A549 (cell line): ENCODE measurements at regions of chr14 and their contacts with region 1.

Region 1: DNA sequence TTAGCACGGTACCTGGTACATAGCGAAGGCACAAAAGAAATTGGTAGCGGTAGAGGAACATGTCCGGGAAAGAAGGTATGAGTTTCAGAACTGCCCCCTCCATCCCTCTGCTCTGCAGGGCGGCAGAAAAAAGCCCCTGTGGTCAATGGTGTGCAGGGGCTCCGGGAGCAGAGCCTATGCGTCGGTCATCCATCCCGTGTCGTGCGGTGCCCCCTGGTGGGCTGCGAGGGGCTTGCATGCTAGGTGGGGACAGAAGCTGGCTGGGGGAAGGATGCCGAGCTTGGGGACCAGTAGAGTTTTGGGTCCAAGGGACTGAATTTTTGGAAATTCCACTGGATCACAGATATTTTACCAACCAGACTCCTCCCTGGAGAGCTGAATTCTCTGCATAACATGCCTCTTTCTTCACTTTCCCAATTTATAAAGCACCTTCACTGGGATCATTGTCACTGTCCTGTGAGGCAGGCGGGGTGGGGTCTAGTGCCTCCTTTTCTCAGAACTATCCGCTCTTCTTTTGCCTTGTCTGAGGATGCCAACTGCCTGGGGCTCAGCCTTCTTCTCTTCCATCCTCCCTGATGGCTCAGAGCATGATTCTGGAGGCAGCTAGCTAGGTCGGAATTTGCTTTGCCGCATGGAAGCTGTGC is 148.7 kb downstream of the SMOC1 start:
- DNase-seq: peak; percentile 55 to 81
- ATAC-seq: peak; percentile 78 to 92
- H3K4me3 ChIP-seq: no peak overlapping the region
- H3K27ac ChIP-seq: peak overlapping the region; percentile 58 to 75
- H3K4me1 ChIP-seq: peaks cover 18% of the 10 kb centered on the region
- CTCF ChIP-seq: peak; percentile 78
- EP300 ChIP-seq: no peak
- POLR2A ChIP-seq: no peak
- RAD21 ChIP-seq: peak; percentile 96 to 97

Region 2: GRCh38 chr14:69643443-69644164 is 384.3 kb before region 1 on chr14:
- CTCF ChIA-PET with region 1: no interaction called
- POLR2A ChIA-PET with region 1: no interaction called
- DNase-seq: peak; percentile 65 to 80
- ATAC-seq: peak; percentile 87 to 91
- H3K4me3 ChIP-seq: no peak overlapping the region
- H3K27ac ChIP-seq: peak overlapping the region; percentile 21 to 64; a peak in 4 of 6 replicates
- H3K4me1 ChIP-seq: peaks cover 39% of the 10 kb centered on the region
- CTCF ChIP-seq: no peak
- EP300 ChIP-seq: no peak
- POLR2A ChIP-seq: no peak
- RAD21 ChIP-seq: no peak

Region 3: DNA sequence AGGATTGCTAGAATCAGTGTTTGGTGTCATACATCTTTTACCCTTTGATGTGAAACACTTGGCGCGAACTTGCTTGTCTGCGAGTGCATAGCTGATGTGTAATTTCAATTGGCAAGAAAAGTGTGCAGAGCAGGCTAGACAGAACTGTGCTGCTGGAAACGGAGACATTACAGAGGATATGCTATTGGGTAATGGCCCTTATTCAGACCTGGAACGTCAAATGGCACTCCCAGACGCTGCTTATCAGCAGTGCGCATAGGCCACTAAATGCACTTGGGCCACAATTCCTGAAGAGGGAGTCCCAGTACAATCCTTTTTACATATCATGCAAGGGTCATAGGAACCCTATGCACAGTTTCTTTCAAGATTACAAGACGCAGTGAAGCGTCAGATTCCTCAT is 215.2 kb before region 1 on chr14:
- CTCF ChIA-PET with region 1: interaction called, 199 read pairs
- POLR2A ChIA-PET with region 1: no interaction called
- DNase-seq: peak in 1 of 2 experiments; percentile 46
- ATAC-seq: 0 out of 6 replicates have a peak, but pooled peaks have one; percentile 36 to 53
- H3K4me3 ChIP-seq: no peak overlapping the region
- H3K27ac ChIP-seq: no peak overlapping the region
- H3K4me1 ChIP-seq: no peaks in the 10 kb centered on the region
- CTCF ChIP-seq: peak; percentile 34; the same call in 2 of the 3 replicates
- EP300 ChIP-seq: no peak
- POLR2A ChIP-seq: no peak
- RAD21 ChIP-seq: peak; percentile 48 to 53; a peak in 3 of 5 replicates

Region 4: GRCh38 chr14:69845787-69846186 is 182.1 kb before region 1 on chr14:
- CTCF ChIA-PET with region 1: interaction called, 15 read pairs
- POLR2A ChIA-PET with region 1: no interaction called
- DNase-seq: no peak
- ATAC-seq: no peak; a peak in 1 of 6 replicates
- H3K4me3 ChIP-seq: no peak overlapping the region
- H3K27ac ChIP-seq: no peak overlapping the region
- H3K4me1 ChIP-seq: peaks cover 3% of the 10 kb centered on the region; the same call in 1 of the 3 replicates
- CTCF ChIP-seq: no peak
- EP300 ChIP-seq: no peak
- POLR2A ChIP-seq: no peak
- RAD21 ChIP-seq: no peak

Region 5: GRCh38 chr14:69879175-69880043 is 148.5 kb before region 1 on chr14 and contains the start of gene SMOC1:
- CTCF ChIA-PET with region 1: interaction called, 57 read pairs
- POLR2A ChIA-PET with region 1: no interaction called
- DNase-seq: peak; percentile 73 to 90
- ATAC-seq: peak; percentile 93 to 95
- H3K4me3 ChIP-seq: peak within 1 kb of the TSS; percentile 65
- H3K27ac ChIP-seq: peak within 1 kb of the TSS; percentile 79 to 89
- H3K4me1 ChIP-seq: peaks cover 20% of the 10 kb centered on the region; the same call in 2 of the 3 replicates
- CTCF ChIP-seq: no peak
- EP300 ChIP-seq: no peak
- POLR2A ChIP-seq: peak; percentile 87
- RAD21 ChIP-seq: peak in 1 of 2 experiments; percentile 43; a peak in 3 of 5 replicates
- polyA plus RNA-seq, gene SMOC1: 18.4 and 31.8 TPM in 2 replicates

Region 6: GRCh38 chr14:70013269-70013873 is 14.5 kb before region 1 on chr14:
- CTCF ChIA-PET with region 1: interaction called, 30 read pairs
- POLR2A ChIA-PET with region 1: no interaction called
- DNase-seq: peak; percentile 28 to 41
- ATAC-seq: peak; percentile 45 to 82; a peak in 4 of 6 replicates
- H3K4me3 ChIP-seq: no peak overlapping the region
- H3K27ac ChIP-seq: 0 out of 6 replicates have a peak overlapping the region, but pooled peaks of 1 of the 2 experiments have one; percentile 17
- H3K4me1 ChIP-seq: peaks cover 10% of the 10 kb centered on the region; the same call in 2 of the 3 replicates
- CTCF ChIP-seq: peak; percentile 45
- EP300 ChIP-seq: no peak
- POLR2A ChIP-seq: no peak
- RAD21 ChIP-seq: peak; percentile 31 to 59; a peak in 3 of 5 replicates

Region 7: GRCh38 chr14:70073924-70074566 is 46.1 kb after region 1 on chr14:
- CTCF ChIA-PET with region 1: interaction called, 37 read pairs
- POLR2A ChIA-PET with region 1: no interaction called
- DNase-seq: peak; percentile 85
- ATAC-seq: peak; percentile 97 to 99
- H3K4me3 ChIP-seq: no peak overlapping the region
- H3K27ac ChIP-seq: peak overlapping the region; percentile 55 to 58; a peak in 5 of 6 replicates
- H3K4me1 ChIP-seq: peaks cover 14% of the 10 kb centered on the region
- CTCF ChIP-seq: peak; percentile 95
- EP300 ChIP-seq: no peak
- POLR2A ChIP-seq: no peak
- RAD21 ChIP-seq: peak; percentile 89 to 95

Region 8: DNA sequence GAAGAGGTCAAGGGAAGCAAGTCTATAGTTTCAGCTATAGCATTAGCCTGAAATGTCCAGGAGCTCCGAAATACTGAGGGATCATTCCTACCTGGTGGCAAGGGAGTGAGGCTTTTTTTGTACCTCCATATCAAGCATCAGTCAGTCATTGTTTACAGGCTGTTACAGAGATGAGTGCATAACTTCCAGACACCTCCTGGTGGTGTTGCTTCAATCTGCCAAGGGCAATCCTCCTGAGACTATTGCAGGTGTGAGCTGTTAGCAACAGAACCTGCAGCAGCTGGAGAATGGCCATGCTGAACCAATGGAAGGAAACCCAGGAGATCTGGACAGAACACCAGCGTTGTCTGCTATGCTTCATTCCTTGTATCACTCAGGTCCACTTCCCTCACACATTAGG is 240.9 kb after region 1 on chr14:
- CTCF ChIA-PET with region 1: no interaction called
- POLR2A ChIA-PET with region 1: no interaction called
- DNase-seq: no peak
- ATAC-seq: no peak
- H3K4me3 ChIP-seq: no peak overlapping the region
- H3K27ac ChIP-seq: no peak overlapping the region
- H3K4me1 ChIP-seq: no peaks in the 10 kb centered on the region
- CTCF ChIP-seq: no peak
- EP300 ChIP-seq: no peak
- POLR2A ChIP-seq: no peak
- RAD21 ChIP-seq: no peak

Region 9: DNA sequence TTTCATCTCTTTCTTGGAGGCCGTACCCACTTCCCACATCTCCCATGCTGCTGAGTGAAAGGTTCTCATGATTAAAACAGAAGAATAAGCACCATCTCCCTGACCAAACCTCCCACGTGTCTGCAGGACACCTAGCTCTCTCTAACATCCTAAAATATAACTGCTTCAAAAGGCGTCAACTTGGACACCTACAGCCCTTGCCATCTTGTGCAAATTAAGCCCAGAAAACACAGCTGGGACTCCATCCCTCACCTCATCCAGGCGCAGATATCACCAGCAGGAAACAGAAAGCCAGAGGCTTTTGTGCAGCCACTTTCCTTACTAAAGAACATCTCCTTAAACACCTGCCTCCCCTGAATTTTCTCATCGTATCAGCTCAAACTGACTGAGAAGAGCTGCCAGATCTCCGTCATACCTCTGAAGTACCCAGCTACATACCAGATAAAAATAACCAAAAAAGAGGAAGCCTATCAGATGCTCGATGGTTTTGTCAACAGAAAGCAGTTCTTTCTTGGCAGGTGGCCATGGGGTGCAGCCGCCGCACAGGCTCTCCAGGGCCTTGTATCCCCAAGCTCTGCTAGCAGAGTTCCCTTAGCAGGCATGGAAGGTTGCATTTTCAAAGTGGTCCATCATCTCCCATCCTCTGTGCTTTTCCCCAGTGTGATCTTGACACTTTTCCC is 752.6 kb after region 1 on chr14:
- CTCF ChIA-PET with region 1: no interaction called
- POLR2A ChIA-PET with region 1: no interaction called
- DNase-seq: no peak
- ATAC-seq: no peak
- H3K4me3 ChIP-seq: no peak overlapping the region
- H3K27ac ChIP-seq: no peak overlapping the region
- H3K4me1 ChIP-seq: 0 out of 3 replicates have a peak, but pooled peaks cover 6% of the 10 kb centered on the region
- CTCF ChIP-seq: no peak
- EP300 ChIP-seq: no peak
- POLR2A ChIP-seq: no peak
- RAD21 ChIP-seq: no peak